ENCODE measurements at regions of chr11 and their contacts with region 1.

Region 1: GRCh38 chr11:123020968-123021367 is 39.3 kb upstream of the BSX start:
- DNase-seq: peak; percentile 49
- ATAC-seq: peak; percentile 90
- H3K4me3 ChIP-seq: no peak overlapping the region
- H3K27ac ChIP-seq: no peak overlapping the region
- H3K4me1 ChIP-seq: no peaks in the 10 kb centered on the region
- H3K27me3 ChIP-seq: peaks cover 35% of the 10 kb centered on the region
- CTCF ChIP-seq: peak; percentile 70
- POLR2A ChIP-seq: no peak
- RAD21 ChIP-seq: peak; percentile 63

Region 2: DNA sequence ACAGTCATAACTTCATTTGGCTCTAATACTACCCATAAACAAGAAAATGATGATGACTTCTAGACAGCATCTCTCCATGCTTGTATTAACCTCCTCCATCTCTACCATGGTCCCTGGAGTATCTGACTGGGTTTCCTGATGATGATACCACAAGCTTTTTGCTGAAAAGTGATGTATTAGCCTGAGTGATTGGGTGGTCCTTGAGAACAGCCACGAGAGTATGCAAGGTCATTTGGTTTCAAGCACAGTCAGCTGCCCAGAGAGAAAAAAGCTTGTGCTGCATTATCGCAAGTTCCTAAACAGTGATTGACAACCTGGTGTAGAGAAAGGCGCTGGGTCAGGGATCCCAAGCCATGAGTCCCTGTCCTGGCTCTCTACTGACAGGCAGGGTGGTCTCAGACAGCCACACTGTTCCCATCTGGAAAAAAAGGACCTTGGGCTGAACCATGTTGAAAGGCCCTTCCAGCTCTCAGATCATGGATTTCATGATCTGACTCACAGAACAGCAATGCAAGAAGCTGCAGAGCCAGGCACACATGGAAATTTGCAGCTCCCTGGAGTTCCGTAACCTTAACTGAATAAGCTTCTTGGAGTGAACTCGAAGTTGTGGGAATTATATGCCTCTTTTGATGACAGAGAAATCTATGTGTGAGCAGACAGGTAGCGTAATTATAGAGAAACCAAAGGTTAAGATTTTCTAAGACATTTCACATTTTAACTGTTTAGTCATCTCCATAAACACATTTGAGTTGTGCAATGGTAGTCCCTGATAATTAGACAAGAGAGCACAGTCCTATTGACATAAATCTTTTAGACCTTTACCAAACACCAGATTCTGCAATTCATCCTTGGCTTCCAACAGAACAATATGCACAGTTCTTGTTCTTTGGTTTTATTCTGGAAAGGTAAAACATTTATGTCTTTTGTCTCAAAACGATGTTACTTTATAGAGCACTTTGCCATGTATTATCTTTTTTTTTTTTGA is 419.5 kb before region 1 on chr11:
- CTCF ChIA-PET with region 1: interaction called, 3 read pairs
- POLR2A ChIA-PET with region 1: no interaction called
- dilution Hi-C with region 1: no loop called
- in situ Hi-C with region 1: loop called (anchors 10 kb)
- intact Hi-C with region 1: no loop called
- DNase-seq: peak; percentile 69
- ATAC-seq: peak; percentile 93
- H3K4me3 ChIP-seq: no peak overlapping the region
- H3K27ac ChIP-seq: no peak overlapping the region
- H3K4me1 ChIP-seq: peaks cover 2% of the 10 kb centered on the region; the same call in 1 of the 2 replicates
- H3K27me3 ChIP-seq: peaks cover 13% of the 10 kb centered on the region
- CTCF ChIP-seq: no peak
- POLR2A ChIP-seq: no peak
- RAD21 ChIP-seq: no peak

Region 3: DNA sequence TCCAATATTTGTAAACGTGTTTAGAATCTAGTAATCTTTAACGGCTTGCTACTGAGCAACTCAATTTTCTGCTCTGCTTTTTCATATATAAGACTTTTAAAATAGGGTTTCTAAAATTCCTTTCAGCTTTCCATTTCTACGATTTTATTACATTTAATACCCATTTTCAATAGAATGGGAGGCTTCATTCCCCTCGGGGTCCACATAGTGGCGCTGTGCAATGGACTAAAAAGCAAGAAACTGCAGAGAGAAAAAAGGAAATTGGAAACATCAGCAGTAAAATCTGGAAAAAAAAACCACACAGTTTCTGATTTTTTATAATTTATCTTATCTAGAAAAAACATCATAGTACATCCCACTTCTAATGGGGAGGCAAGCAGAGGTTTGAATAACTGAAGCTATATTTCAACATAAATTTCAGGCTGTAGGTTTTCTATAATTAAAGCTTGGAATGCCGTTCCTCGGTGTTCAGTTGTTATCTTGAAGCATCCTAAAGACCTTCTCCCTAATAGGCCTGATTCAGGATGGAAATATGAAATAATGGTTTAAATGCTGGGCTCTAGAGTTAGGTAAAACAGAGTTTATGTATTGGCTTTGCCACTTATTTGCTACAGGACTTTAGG is 157.2 kb before region 1 on chr11:
- CTCF ChIA-PET with region 1: interaction called, 53 read pairs
- POLR2A ChIA-PET with region 1: no interaction called
- dilution Hi-C with region 1: loop called (anchors 25 kb)
- in situ Hi-C with region 1: no loop called
- intact Hi-C with region 1: loop called (anchors 1 kb)
- DNase-seq: peak; percentile 50
- ATAC-seq: peak; percentile 57; the same call in 1 of the 2 replicates
- H3K4me3 ChIP-seq: no peak overlapping the region
- H3K27ac ChIP-seq: no peak overlapping the region
- H3K4me1 ChIP-seq: no peaks in the 10 kb centered on the region
- H3K27me3 ChIP-seq: peaks cover 32% of the 10 kb centered on the region
- CTCF ChIP-seq: peak; percentile 96
- POLR2A ChIP-seq: no peak
- RAD21 ChIP-seq: peak; percentile 86

Region 4: DNA sequence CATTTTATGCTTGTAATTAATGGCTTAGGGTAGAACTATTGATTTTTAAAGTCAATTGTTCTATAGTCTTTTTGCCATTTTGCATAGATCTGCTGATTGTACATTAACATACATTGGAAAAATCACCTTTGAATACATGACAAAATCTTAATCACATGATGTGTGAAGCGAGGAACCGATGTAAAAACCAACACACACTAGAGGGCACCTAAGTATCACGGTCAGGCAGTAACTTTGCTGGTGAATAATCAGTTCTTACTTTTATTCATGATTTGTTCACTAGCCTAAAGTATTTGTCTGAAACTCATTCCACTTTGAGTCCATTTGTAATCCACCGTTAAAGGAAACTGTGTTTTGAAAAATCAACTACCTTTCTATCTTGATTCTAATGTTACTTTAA is 110.2 kb before region 1 on chr11:
- CTCF ChIA-PET with region 1: interaction called, 3 read pairs
- POLR2A ChIA-PET with region 1: no interaction called
- dilution Hi-C with region 1: no loop called
- in situ Hi-C with region 1: no loop called
- intact Hi-C with region 1: loop called (anchors 1 kb)
- DNase-seq: peak; percentile 38
- ATAC-seq: no peak
- H3K4me3 ChIP-seq: no peak overlapping the region
- H3K27ac ChIP-seq: no peak overlapping the region
- H3K4me1 ChIP-seq: no peaks in the 10 kb centered on the region
- H3K27me3 ChIP-seq: peaks cover 12% of the 10 kb centered on the region
- CTCF ChIP-seq: peak; percentile 48
- POLR2A ChIP-seq: no peak
- RAD21 ChIP-seq: peak; percentile 62

Measured in IMR-90 (cell line).